ENCODE measurements at regions of chr3 and their contacts with region 1.

Region 1: DNA sequence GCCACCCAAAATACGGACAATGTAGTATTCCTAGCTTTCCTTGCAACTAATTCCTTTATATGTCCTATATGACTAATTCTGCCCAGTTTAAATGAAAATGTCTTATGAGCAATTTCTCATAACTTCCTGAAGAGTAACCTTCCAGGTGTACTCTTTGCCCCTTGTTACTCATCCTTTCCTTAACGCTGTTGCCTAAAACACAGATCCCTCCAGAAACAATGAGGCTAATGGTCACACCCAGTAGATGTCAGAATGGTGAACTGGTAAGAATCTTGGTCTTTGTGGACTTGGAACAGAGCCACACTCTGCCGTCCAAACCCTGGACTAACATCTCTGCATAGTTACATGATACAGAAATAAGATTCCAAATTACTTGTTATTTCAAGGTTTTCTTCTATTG is 497.9 kb downstream of the IGSF11 start:
- DNase-seq: peak in 1 of 2 experiments; percentile 30
- H3K4me3 ChIP-seq: no peak overlapping the region
- H3K27ac ChIP-seq: no peak overlapping the region
- H3K4me1 ChIP-seq: peaks cover 10% of the 10 kb centered on the region; the same call in 1 of the 2 replicates
- H3K27me3 ChIP-seq: no peaks in the 10 kb centered on the region
- CTCF ChIP-seq: no peak

Region 2: GRCh38 chr3:118472588-118472987 is 64.2 kb before region 1 on chr3:
- CTCF ChIA-PET with region 1: no interaction called
- POLR2A ChIA-PET with region 1: no interaction called
- intact Hi-C with region 1: loop called (anchors 5 kb)
- DNase-seq: peak; percentile 33 to 62
- H3K4me3 ChIP-seq: no peak overlapping the region
- H3K27ac ChIP-seq: peak overlapping the region; percentile 51
- H3K4me1 ChIP-seq: peaks cover 19% of the 10 kb centered on the region
- H3K27me3 ChIP-seq: no peaks in the 10 kb centered on the region
- CTCF ChIP-seq: no peak

Region 3: DNA sequence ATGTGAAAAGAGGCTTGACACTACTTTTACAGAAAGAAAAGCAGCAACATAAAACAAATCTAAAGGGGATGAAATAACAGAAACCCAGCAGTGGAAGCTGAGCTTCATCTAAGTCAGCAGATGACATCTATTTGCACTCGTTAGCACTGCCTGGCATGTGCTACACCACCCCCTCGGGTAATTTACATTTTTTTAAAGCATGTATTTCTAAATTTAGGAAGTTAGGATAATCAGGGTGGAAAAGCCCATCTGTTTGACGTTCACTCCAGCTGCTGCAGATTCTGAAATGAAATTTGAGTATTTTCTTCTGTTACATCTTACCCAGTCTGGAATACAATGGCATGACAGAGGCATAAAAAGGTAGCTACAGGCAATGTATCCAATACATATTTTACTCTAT is 477.2 kb after region 1 on chr3:
- CTCF ChIA-PET with region 1: no interaction called
- POLR2A ChIA-PET with region 1: no interaction called
- intact Hi-C with region 1: no loop called
- DNase-seq: no peak
- H3K4me3 ChIP-seq: no peak overlapping the region
- H3K27ac ChIP-seq: no peak overlapping the region
- H3K4me1 ChIP-seq: no peaks in the 10 kb centered on the region
- H3K27me3 ChIP-seq: no peaks in the 10 kb centered on the region
- CTCF ChIP-seq: no peak

Region 4: GRCh38 chr3:119524931-119525662 is 988.3 kb after region 1 on chr3:
- CTCF ChIA-PET with region 1: no interaction called
- POLR2A ChIA-PET with region 1: no interaction called
- intact Hi-C with region 1: no loop called
- DNase-seq: no peak
- H3K4me3 ChIP-seq: no peak overlapping the region
- H3K27ac ChIP-seq: no peak overlapping the region
- H3K4me1 ChIP-seq: no peaks in the 10 kb centered on the region
- H3K27me3 ChIP-seq: no peaks in the 10 kb centered on the region
- CTCF ChIP-seq: peak; percentile 42; the same call in 1 of the 2 replicates